B cell (primary cell): ENCODE measurements at regions of chr3 and their contacts with region 1.

Region 1: GRCh38 chr3:170037463-170038433 is at the start of gene GPR160:
- DNase-seq: peak; percentile 90
- ATAC-seq: peak; percentile 77
- H3K4me3 ChIP-seq: peak within 1 kb of the TSS; percentile 66 to 91 (median 83)
- H3K4me3 Mint-ChIP-seq: peak within 1 kb of the TSS; percentile 93
- H3K27ac ChIP-seq: peak within 1 kb of the TSS; percentile 28 to 48
- H3K27ac Mint-ChIP-seq: peak within 1 kb of the TSS; percentile 89
- H3K4me1 ChIP-seq: peaks cover 11 to 25% of the 10 kb centered on the region in 2 donors
- H3K4me1 Mint-ChIP-seq: peaks cover 44% of the 10 kb centered on the region
- H3K27me3 ChIP-seq: no peaks in the 10 kb centered on the region
- H3K27me3 Mint-ChIP-seq: no peaks in the 10 kb centered on the region
- CTCF ChIP-seq: peak; percentile 91
- total RNA-seq, gene GPR160: 17.5 and 17.7 TPM in 2 replicates

Region 2: GRCh38 chr3:169846458-169847193 is 191.1 kb before region 1 on chr3:
- CTCF ChIA-PET with region 1: no interaction called
- POLR2A ChIA-PET with region 1: interaction called, 4 read pairs
- intact Hi-C with region 1: loop called (anchors 5 kb)
- DNase-seq: peak; percentile 72
- ATAC-seq: peak; percentile 89
- H3K4me3 ChIP-seq: peak overlapping the region in 4 of 5 experiments; percentile 16 to 57 (median 43)
- H3K4me3 Mint-ChIP-seq: peak overlapping the region; percentile 80
- H3K27ac ChIP-seq: peak overlapping the region; percentile 68 to 74
- H3K27ac Mint-ChIP-seq: peak overlapping the region; percentile 95
- H3K4me1 ChIP-seq: peaks cover 44 to 46% of the 10 kb centered on the region in 2 donors
- H3K4me1 Mint-ChIP-seq: peaks cover 53% of the 10 kb centered on the region
- H3K27me3 ChIP-seq: no peaks in the 10 kb centered on the region
- H3K27me3 Mint-ChIP-seq: no peaks in the 10 kb centered on the region
- CTCF ChIP-seq: no peak

Region 3: GRCh38 chr3:169992161-169992560 is 45.6 kb before region 1 on chr3:
- CTCF ChIA-PET with region 1: no interaction called
- POLR2A ChIA-PET with region 1: no interaction called
- intact Hi-C with region 1: loop called (anchors 5 kb)
- DNase-seq: no peak
- ATAC-seq: no peak
- H3K4me3 ChIP-seq: no peak overlapping the region
- H3K4me3 Mint-ChIP-seq: no peak overlapping the region
- H3K27ac ChIP-seq: peak overlapping the region in 1 of 2 donors; percentile 38
- H3K27ac Mint-ChIP-seq: no peak overlapping the region
- H3K4me1 ChIP-seq: no peaks in the 10 kb centered on the region
- H3K4me1 Mint-ChIP-seq: peaks cover 9% of the 10 kb centered on the region
- H3K27me3 ChIP-seq: no peaks in the 10 kb centered on the region
- H3K27me3 Mint-ChIP-seq: no peaks in the 10 kb centered on the region
- CTCF ChIP-seq: no peak

Region 4: DNA sequence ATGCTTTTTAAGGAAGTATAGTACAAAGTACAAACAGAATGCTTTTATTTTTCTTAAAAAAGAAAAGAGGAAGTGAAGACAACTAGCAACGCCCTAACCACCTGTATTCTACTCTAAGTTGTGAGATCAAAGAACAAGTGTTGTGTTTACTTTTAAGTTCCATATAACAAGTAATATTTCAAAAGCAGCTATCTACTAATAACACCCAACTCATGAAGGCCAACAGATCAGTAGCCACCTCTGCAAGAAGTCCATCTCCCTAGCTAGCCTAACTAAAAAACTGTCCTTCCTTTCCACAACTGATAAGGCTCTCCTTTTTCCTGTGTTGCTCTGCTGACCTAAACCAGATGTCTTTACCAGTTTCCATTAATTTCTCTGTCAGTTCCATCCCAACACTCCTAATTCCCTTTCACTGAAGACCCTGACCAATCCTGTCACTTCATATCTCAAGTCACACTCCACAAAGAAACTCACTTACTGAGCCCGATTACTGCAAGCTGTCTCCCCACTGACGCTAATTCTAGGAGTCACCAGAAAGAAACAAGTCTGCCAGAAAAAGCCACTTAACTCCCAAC is 116.9 kb after region 1 on chr3:
- CTCF ChIA-PET with region 1: no interaction called
- POLR2A ChIA-PET with region 1: no interaction called
- intact Hi-C with region 1: loop called (anchors 5 kb)
- DNase-seq: peak; percentile 75
- ATAC-seq: peak; percentile 89
- H3K4me3 ChIP-seq: peak overlapping the region; percentile 2 to 48 (median 35)
- H3K4me3 Mint-ChIP-seq: peak overlapping the region; percentile 82
- H3K27ac ChIP-seq: peak overlapping the region; percentile 85 to 91
- H3K27ac Mint-ChIP-seq: peak overlapping the region; percentile 98
- H3K4me1 ChIP-seq: peaks cover 65% of the 10 kb centered on the region in 2 donors
- H3K4me1 Mint-ChIP-seq: peaks cover 59% of the 10 kb centered on the region
- H3K27me3 ChIP-seq: no peaks in the 10 kb centered on the region
- H3K27me3 Mint-ChIP-seq: no peaks in the 10 kb centered on the region
- CTCF ChIP-seq: no peak

Region 5: GRCh38 chr3:170414202-170414663 is 376.5 kb after region 1 on chr3:
- CTCF ChIA-PET with region 1: no interaction called
- POLR2A ChIA-PET with region 1: no interaction called
- intact Hi-C with region 1: loop called (anchors 5 kb)
- DNase-seq: peak; percentile 65
- ATAC-seq: peak; percentile 58
- H3K4me3 ChIP-seq: no peak overlapping the region
- H3K4me3 Mint-ChIP-seq: no peak overlapping the region
- H3K27ac ChIP-seq: no peak overlapping the region
- H3K27ac Mint-ChIP-seq: no peak overlapping the region
- H3K4me1 ChIP-seq: peaks cover 10 to 11% of the 10 kb centered on the region in 2 donors
- H3K4me1 Mint-ChIP-seq: peaks cover 10% of the 10 kb centered on the region
- H3K27me3 ChIP-seq: peaks cover 0 to 18% (median 12%) of the 10 kb centered on the region in 4 experiments
- H3K27me3 Mint-ChIP-seq: peaks cover 22% of the 10 kb centered on the region
- CTCF ChIP-seq: peak; percentile 92

Region 6: DNA sequence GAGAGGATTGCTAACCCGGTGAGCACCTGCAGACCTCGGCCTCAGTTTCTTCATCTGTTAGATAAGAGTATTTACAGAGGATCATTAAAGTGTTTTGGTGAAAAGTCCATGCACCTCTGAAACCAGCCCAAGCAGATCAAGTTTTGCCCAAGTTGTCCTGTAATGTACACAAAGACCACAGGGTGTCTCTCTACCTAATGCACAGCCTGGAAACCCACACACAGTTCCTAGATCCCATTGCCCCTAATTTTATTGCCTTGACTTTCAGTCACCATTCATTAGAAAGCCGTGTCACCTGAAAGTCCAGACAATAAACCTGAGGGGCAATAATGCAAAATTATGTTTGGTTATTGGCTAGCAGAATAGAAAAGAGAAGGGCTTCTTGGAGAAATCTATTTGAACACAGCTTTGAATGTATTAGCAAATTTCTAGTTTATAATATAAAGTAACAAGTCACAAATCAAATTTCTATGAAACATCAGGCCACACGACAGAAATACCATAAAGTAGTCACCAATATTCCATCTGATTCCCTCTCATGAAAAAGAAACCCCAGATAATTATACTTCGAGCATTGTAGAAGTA is 1150.0 kb after region 1 on chr3:
- CTCF ChIA-PET with region 1: no interaction called
- POLR2A ChIA-PET with region 1: no interaction called
- intact Hi-C with region 1: no loop called
- DNase-seq: peak; percentile 32
- ATAC-seq: no peak
- H3K4me3 ChIP-seq: no peak overlapping the region
- H3K4me3 Mint-ChIP-seq: no peak overlapping the region
- H3K27ac ChIP-seq: no peak overlapping the region
- H3K27ac Mint-ChIP-seq: no peak overlapping the region
- H3K4me1 ChIP-seq: no peaks in the 10 kb centered on the region
- H3K4me1 Mint-ChIP-seq: no peaks in the 10 kb centered on the region
- H3K27me3 ChIP-seq: no peaks in the 10 kb centered on the region
- H3K27me3 Mint-ChIP-seq: no peaks in the 10 kb centered on the region
- CTCF ChIP-seq: peak; percentile 60